ENCODE measurements at regions of chr6 and their contacts with region 1.

Region 1: GRCh38 chr6:75526502-75527127 is 33.0 kb upstream of the FILIP1 start:
- DNase-seq: peak; percentile 87
- H3K4me3 ChIP-seq: no peak overlapping the region
- H3K27ac ChIP-seq: no peak overlapping the region
- H3K4me1 ChIP-seq: peaks cover 14% of the 10 kb centered on the region
- H3K27me3 ChIP-seq: peaks cover 2 to 3% of the 10 kb centered on the region in 2 experiments
- CTCF ChIP-seq: peak; percentile 48 to 54
- POLR2A ChIP-seq: no peak

Region 2: DNA sequence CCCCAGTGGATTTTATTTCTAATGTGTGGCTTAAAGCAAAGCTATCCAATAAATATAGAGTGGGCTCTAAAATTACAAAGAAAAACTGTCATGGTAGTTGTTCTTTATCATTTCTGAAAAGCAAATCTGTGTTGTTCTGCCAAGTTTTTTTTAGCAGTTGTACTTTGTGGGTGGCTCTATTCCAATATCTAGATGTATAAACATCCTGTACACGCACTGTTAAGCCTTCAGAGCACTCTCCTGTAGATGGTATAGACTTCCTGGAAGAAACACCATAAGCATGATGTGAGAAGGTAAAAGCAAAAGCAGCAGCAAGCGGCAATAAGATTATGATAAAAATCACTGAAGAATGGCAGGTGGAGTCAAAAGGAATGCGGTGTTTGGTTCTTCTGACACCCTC is 220.6 kb before region 1 on chr6:
- CTCF ChIA-PET with region 1: interaction called, 13 read pairs
- POLR2A ChIA-PET with region 1: no interaction called
- dilution Hi-C with region 1: loop called (anchors 25 kb)
- intact Hi-C with region 1: no loop called
- DNase-seq: peak; percentile 81
- H3K4me3 ChIP-seq: no peak overlapping the region
- H3K27ac ChIP-seq: no peak overlapping the region
- H3K4me1 ChIP-seq: peaks cover 3% of the 10 kb centered on the region
- H3K27me3 ChIP-seq: peaks cover 0 to 2% of the 10 kb centered on the region in 2 experiments
- CTCF ChIP-seq: no peak
- POLR2A ChIP-seq: no peak

Region 3: DNA sequence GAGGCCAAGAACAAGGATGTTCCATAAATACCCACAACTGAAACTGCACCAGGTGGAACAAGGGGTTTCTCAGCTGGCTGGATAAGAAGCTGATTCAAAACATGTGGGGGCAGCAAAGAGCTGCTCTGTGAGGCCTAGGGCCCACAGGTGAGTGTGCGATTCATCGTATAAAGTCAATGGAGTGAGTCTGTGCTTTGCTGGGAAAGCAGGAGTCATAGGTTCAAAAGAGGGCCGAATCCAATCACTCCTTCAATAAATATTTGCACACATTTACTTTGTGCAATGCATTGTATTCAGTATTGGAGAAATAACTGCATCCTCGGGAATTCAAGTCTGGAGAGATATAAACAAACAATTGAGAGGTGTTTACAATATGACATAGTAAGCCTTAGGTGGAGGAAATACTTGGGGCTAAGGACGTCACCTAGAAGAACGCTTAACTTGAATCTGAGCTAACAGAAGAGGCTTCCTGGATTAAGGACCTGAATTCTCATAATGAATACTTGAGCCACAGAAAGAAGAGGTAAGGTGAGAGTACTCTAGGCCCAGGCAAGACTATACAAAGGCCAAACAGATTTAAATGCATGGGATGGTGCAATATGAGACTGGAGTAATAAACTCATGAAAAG is 158.3 kb before region 1 on chr6:
- CTCF ChIA-PET with region 1: interaction called, 27 read pairs
- POLR2A ChIA-PET with region 1: no interaction called
- dilution Hi-C with region 1: no loop called
- intact Hi-C with region 1: loop called (anchors 1 kb)
- DNase-seq: peak; percentile 78
- H3K4me3 ChIP-seq: no peak overlapping the region
- H3K27ac ChIP-seq: no peak overlapping the region
- H3K4me1 ChIP-seq: no peaks in the 10 kb centered on the region
- H3K27me3 ChIP-seq: no peaks in the 10 kb centered on the region
- CTCF ChIP-seq: peak; percentile 37 to 57
- POLR2A ChIP-seq: no peak

Region 4: GRCh38 chr6:75484535-75484934 is 42.1 kb before region 1 on chr6:
- CTCF ChIA-PET with region 1: interaction called, 5 read pairs
- POLR2A ChIA-PET with region 1: no interaction called
- dilution Hi-C with region 1: no loop called
- intact Hi-C with region 1: loop called (anchors 1 kb)
- DNase-seq: no peak
- H3K4me3 ChIP-seq: no peak overlapping the region
- H3K27ac ChIP-seq: no peak overlapping the region
- H3K4me1 ChIP-seq: peaks cover 36% of the 10 kb centered on the region
- H3K27me3 ChIP-seq: no peaks in the 10 kb centered on the region
- CTCF ChIP-seq: no peak
- POLR2A ChIP-seq: no peak

Region 5: GRCh38 chr6:75504465-75505228 is 22.0 kb before region 1 on chr6:
- CTCF ChIA-PET with region 1: interaction called, 12 read pairs
- POLR2A ChIA-PET with region 1: no interaction called
- dilution Hi-C with region 1: no loop called
- intact Hi-C with region 1: no loop called
- DNase-seq: no peak
- H3K4me3 ChIP-seq: no peak overlapping the region
- H3K27ac ChIP-seq: no peak overlapping the region
- H3K4me1 ChIP-seq: peaks cover 27% of the 10 kb centered on the region
- H3K27me3 ChIP-seq: no peaks in the 10 kb centered on the region
- CTCF ChIP-seq: peak in 1 of 2 donors; percentile 15
- POLR2A ChIP-seq: no peak

Region 6: DNA sequence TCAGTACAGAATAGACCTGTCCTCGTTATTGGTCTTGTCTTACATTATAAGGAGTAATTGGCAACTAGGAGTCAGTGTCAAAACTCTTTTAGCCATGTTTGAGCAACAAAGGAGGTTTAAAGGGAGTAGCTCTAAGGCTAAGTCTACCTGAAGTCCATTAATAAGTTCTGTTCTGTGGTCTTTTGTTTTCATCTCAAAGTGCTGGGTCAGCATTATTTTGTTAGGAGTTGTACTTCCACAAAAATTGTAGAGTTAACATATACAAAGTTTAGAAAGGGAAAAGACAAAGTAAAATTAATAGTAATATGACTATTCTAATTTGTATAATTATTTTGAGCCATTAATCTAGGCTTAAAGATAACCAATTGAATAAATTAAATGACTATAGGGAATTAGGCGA is 62.3 kb after region 1 on chr6:
- CTCF ChIA-PET with region 1: no interaction called
- POLR2A ChIA-PET with region 1: no interaction called
- dilution Hi-C with region 1: no loop called
- intact Hi-C with region 1: no loop called
- DNase-seq: no peak
- H3K4me3 ChIP-seq: no peak overlapping the region
- H3K27ac ChIP-seq: no peak overlapping the region
- H3K4me1 ChIP-seq: no peaks in the 10 kb centered on the region
- H3K27me3 ChIP-seq: no peaks in the 10 kb centered on the region
- CTCF ChIP-seq: no peak
- POLR2A ChIP-seq: no peak

Measured in endothelial cell of umbilical vein (primary cell).